ENCODE measurements at regions of chr1 and their contacts with region 1.

Region 1: DNA sequence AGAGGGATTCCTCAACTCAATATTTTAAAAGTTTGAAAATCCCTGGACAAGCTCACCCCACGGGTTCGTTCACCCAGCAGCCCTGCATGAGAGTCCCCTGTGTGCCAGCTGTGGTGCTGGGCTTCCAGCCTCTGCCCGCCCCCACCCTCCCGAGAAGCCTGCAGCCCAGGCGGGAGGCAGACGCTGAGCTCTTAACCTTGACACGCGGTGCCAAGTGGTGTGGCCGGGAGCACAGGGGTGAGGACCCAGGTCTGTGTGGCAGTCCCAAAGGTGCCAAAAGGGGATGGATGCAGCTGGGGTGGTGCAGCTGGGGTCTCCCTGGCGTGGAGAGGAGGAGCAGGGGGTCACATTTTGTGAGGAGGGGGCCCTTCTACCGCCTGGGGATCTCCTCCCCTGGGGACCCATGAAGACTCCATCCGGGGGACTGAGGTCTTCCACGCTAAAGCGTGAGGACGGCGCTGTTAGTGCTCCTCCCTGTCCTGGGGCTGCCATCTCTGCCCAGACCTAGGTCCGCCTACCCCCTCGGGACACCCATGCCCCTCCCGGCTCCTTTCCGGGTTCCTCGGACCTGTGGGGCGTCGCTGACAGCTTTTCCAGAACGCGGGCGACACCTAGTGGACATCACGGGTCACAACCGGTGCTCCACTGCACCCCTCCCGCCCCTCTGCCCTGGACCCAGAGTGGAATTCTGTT is 12.9 kb downstream of the PLA2G2F start:
- DNase-seq: peak; percentile 72
- H3K4me3 Mint-ChIP-seq: peak overlapping the region; percentile 55
- H3K27ac Mint-ChIP-seq: no peak overlapping the region
- H3K4me1 Mint-ChIP-seq: peaks cover 6% of the 10 kb centered on the region
- H3K27me3 Mint-ChIP-seq: no peaks in the 10 kb centered on the region
- CTCF ChIP-seq: peak; percentile 90

Region 2: GRCh38 chr1:19762175-19762779 is 389.8 kb before region 1 on chr1:
- CTCF ChIA-PET with region 1: no interaction called
- POLR2A ChIA-PET with region 1: no interaction called
- intact Hi-C with region 1: loop called (anchors 5 kb)
- DNase-seq: peak; percentile 44
- H3K4me3 Mint-ChIP-seq: no peak overlapping the region
- H3K27ac Mint-ChIP-seq: no peak overlapping the region
- H3K4me1 Mint-ChIP-seq: peaks cover 20% of the 10 kb centered on the region
- H3K27me3 Mint-ChIP-seq: no peaks in the 10 kb centered on the region
- CTCF ChIP-seq: peak; percentile 69

Region 3: GRCh38 chr1:19888112-19888511 is 263.9 kb before region 1 on chr1:
- CTCF ChIA-PET with region 1: no interaction called
- POLR2A ChIA-PET with region 1: no interaction called
- intact Hi-C with region 1: no loop called
- DNase-seq: no peak
- H3K4me3 Mint-ChIP-seq: no peak overlapping the region
- H3K27ac Mint-ChIP-seq: no peak overlapping the region
- H3K4me1 Mint-ChIP-seq: peaks cover 38% of the 10 kb centered on the region
- H3K27me3 Mint-ChIP-seq: no peaks in the 10 kb centered on the region
- CTCF ChIP-seq: no peak

Region 4: DNA sequence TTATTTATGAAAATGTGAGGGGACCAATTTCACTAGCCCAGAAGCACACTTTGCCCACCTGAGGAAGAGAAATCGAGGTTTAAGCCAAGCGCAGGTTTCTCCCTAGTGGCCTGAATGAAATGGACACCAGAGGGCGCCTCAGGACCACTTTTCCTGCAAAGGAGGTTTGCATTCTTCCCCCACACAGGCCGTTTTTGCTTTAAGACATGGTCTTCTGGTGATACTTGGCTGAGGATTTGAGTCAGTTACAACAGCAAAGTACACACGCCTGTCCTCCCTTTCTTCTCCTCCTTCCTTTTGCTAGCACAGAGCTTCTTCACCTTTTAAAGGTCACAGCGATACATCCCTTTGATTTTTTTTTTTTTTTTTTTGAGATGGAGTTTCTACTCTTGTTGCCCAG is 234.0 kb before region 1 on chr1:
- CTCF ChIA-PET with region 1: interaction called, 76 read pairs
- POLR2A ChIA-PET with region 1: no interaction called
- intact Hi-C with region 1: loop called (anchors 1 kb)
- DNase-seq: peak; percentile 84
- H3K4me3 Mint-ChIP-seq: no peak overlapping the region
- H3K27ac Mint-ChIP-seq: no peak overlapping the region
- H3K4me1 Mint-ChIP-seq: peaks cover 11% of the 10 kb centered on the region
- H3K27me3 Mint-ChIP-seq: no peaks in the 10 kb centered on the region
- CTCF ChIP-seq: peak; percentile 90

Region 5: GRCh38 chr1:19974822-19975416 is 177.1 kb before region 1 on chr1:
- CTCF ChIA-PET with region 1: interaction called, 41 read pairs
- POLR2A ChIA-PET with region 1: interaction called, 3 read pairs
- intact Hi-C with region 1: loop called (anchors 1 kb)
- DNase-seq: peak; percentile 67
- H3K4me3 Mint-ChIP-seq: no peak overlapping the region
- H3K27ac Mint-ChIP-seq: no peak overlapping the region
- H3K4me1 Mint-ChIP-seq: peaks cover 4% of the 10 kb centered on the region
- H3K27me3 Mint-ChIP-seq: peaks cover 34% of the 10 kb centered on the region
- CTCF ChIP-seq: peak; percentile 83

Region 6: GRCh38 chr1:20059847-20060246 is 92.2 kb before region 1 on chr1:
- CTCF ChIA-PET with region 1: no interaction called
- POLR2A ChIA-PET with region 1: no interaction called
- intact Hi-C with region 1: no loop called
- DNase-seq: no peak
- H3K4me3 Mint-ChIP-seq: no peak overlapping the region
- H3K27ac Mint-ChIP-seq: no peak overlapping the region
- H3K4me1 Mint-ChIP-seq: peaks cover 11% of the 10 kb centered on the region
- H3K27me3 Mint-ChIP-seq: no peaks in the 10 kb centered on the region
- CTCF ChIP-seq: no peak

Region 7: DNA sequence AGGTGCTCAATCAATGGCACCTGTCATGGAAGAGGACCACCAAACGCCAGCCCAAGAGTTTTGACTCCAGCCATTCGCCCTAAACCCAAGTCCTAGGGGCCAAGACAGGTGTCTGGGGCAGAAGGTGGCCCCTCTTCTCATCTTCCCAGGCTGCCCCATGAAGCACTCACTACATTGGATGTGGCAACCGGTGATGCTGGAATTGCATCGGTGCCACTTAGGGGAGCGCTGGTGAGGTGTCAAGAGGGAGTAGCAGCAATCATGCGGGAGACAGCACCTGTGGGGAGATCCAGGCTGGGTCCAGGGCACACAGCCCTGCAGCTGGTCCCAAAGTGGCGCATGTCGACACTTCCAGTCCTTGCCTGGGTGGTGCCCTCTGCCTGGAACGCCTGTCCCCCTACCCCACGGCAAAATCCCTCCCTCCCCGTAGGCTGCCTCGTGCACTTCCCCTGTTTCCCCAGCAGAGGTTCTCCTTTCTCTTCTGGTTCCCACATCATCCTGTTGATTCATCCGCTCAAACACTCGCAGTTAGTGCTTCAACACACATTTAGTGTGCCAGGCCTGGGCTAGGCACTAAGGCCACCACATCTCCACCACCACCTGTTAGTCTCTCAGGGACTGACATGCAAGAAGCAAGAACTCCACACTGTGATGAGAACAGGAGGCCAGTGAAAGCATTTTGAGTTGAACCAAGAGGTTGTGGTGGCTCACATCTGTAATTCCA is 51.3 kb before region 1 on chr1:
- CTCF ChIA-PET with region 1: interaction called, 76 read pairs
- POLR2A ChIA-PET with region 1: interaction called, 3 read pairs
- intact Hi-C with region 1: loop called (anchors 1 kb)
- DNase-seq: peak; percentile 61
- H3K4me3 Mint-ChIP-seq: no peak overlapping the region
- H3K27ac Mint-ChIP-seq: no peak overlapping the region
- H3K4me1 Mint-ChIP-seq: peaks cover 12% of the 10 kb centered on the region
- H3K27me3 Mint-ChIP-seq: no peaks in the 10 kb centered on the region
- CTCF ChIP-seq: peak; percentile 92

Region 8: DNA sequence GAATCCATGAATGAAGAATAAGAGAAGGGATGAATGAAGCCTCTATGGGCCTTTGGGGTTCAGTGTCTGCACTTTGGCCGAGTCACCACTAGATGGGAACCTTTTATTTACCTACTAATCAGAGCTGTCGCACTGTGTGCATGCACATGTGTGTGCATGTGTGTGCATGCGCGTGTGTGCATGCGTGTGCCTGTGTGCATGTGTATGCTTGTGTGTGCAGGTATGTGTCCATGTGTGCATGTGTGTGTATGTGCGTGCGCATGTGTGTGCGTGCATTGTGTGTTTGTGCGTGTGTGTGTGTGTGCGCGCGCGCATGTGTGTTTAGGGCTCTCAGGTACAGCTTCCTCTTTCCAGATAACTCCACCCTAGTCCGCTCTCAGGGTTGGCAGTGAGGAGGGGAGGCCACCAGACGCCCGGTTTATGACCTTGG is 13.5 kb after region 1 on chr1:
- CTCF ChIA-PET with region 1: interaction called, 47 read pairs
- POLR2A ChIA-PET with region 1: interaction called, 4 read pairs
- intact Hi-C with region 1: no loop called
- DNase-seq: peak; percentile 46
- H3K4me3 Mint-ChIP-seq: no peak overlapping the region
- H3K27ac Mint-ChIP-seq: no peak overlapping the region
- H3K4me1 Mint-ChIP-seq: peaks cover 16% of the 10 kb centered on the region
- H3K27me3 Mint-ChIP-seq: no peaks in the 10 kb centered on the region
- CTCF ChIP-seq: peak; percentile 29

Region 9: GRCh38 chr1:20172033-20172590 is 20.1 kb after region 1 on chr1:
- CTCF ChIA-PET with region 1: interaction called, 15 read pairs
- POLR2A ChIA-PET with region 1: no interaction called
- intact Hi-C with region 1: no loop called
- DNase-seq: no peak
- H3K4me3 Mint-ChIP-seq: no peak overlapping the region
- H3K27ac Mint-ChIP-seq: peak overlapping the region; percentile 67
- H3K4me1 Mint-ChIP-seq: peaks cover 6% of the 10 kb centered on the region
- H3K27me3 Mint-ChIP-seq: no peaks in the 10 kb centered on the region
- CTCF ChIP-seq: no peak

Measured in MCF 10A (cell line).